Endothelial cell of umbilical vein (primary cell): ENCODE measurements at regions of chr17 and their contacts with region 1.

Region 1: DNA sequence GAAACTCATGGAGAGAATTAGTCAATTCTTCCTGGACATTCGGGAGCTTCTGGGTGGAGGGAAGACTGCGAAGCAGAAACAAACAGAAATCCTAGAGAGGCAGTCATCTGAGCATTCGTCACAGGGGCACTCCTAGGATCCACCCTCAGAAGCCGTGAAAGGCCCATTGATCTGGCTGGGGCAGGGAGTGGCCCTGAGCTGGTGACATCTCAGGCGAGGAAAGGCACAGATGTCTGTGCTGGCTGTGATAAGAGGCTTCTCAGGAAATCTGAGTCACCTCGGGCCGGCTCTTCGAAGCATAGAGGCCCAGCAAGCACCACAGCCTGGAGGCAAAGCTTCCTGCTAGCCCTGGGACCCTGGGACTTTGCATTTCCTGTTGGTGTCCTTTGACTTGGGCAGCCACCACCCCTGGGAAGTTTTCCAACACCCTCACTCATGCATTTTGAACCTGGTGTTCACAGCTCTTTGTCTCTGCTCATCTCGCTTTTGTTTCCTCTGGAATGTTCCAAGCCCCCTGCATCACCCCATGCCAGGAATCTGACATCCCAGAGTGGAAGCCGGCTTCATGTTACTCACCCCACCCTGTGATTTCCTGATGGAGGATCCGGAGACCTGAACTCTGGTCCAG is 23.3 kb upstream of the CDRT4 start:
- DNase-seq: peak; percentile 93
- H3K4me3 ChIP-seq: no peak overlapping the region
- H3K27ac ChIP-seq: peak overlapping the region; percentile 91
- H3K4me1 ChIP-seq: peaks cover 23% of the 10 kb centered on the region
- H3K27me3 ChIP-seq: no peaks in the 10 kb centered on the region
- CTCF ChIP-seq: no peak
- POLR2A ChIP-seq: peak; percentile 55

Region 2: DNA sequence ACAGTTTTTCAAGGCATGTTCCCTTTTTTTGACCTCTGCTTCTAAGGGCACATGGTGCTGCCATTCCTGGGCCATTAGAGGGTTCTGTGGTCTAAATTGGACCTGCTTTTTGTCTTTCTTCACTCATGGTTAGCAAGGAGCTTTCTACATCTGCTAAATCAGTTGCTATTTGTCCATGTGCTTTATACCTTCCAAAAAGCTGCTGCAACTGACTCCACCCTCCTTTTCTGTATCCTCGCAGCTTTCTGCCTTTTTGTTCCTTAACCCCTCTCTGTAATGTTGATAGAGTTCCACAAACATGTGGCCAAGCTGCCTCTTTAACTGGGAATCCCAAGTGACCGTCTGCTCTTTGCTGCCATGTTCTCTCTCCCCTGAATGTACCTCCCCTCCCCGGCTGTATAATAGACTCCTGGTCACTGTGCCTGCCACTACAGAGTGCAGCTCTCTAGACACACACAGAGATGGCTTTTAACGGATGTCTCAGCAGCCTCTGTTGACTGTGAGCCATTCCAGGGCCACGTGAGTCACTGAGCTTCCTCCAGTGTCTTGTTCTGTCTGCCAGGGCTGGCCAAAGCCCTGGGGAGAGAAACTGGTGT is 91.9 kb before region 1 on chr17:
- CTCF ChIA-PET with region 1: no interaction called
- POLR2A ChIA-PET with region 1: no interaction called
- dilution Hi-C with region 1: no loop called
- intact Hi-C with region 1: loop called (anchors 5 kb)
- DNase-seq: peak; percentile 5
- H3K4me3 ChIP-seq: no peak overlapping the region
- H3K27ac ChIP-seq: peak overlapping the region; percentile 9
- H3K4me1 ChIP-seq: peaks cover 16% of the 10 kb centered on the region
- H3K27me3 ChIP-seq: no peaks in the 10 kb centered on the region
- CTCF ChIP-seq: no peak
- POLR2A ChIP-seq: no peak

Region 3: DNA sequence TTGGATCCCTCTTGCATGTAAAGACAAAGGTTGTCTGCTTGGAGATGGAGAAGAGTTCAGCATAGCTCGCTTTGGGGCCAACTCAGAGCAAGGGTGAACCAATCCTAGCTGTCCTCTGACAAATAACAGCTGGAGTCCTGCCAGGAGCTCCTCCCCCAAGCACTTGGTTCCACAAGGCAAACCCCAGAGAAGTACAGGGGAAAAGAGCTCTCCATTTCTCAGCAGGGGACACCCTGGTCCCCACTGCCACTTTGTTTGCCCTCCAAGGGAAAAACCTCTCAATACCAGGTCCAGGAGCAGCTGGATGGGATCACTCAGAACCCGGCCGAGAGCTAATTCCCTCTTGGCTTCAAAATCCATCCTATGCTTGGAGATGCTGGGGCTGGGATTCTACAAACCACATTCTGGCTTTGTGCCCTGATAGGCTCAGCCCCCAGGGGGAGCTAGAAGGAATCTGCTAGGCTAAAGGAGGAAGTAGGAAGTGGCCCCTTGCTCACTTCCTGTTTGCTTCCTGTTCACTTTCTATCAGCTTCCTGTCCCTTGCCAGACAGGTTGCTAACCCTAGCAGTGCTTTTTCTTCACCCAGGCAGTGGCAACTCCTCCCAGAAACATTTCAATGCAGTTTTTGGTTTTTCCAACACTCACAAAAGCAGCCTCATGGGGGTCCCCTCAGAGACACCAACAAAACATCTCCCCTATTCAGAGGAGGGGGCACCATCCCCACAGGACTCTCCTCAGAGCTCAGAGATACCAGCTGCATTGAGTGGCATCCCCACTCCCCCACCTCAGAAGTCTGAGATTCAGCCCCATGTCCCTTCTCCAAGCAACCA is 54.1 kb before region 1 on chr17:
- CTCF ChIA-PET with region 1: interaction called, 3 read pairs
- POLR2A ChIA-PET with region 1: no interaction called
- dilution Hi-C with region 1: no loop called
- intact Hi-C with region 1: loop called (anchors 2 kb)
- DNase-seq: peak; percentile 32
- H3K4me3 ChIP-seq: no peak overlapping the region
- H3K27ac ChIP-seq: no peak overlapping the region
- H3K4me1 ChIP-seq: peaks cover 23% of the 10 kb centered on the region
- H3K27me3 ChIP-seq: no peaks in the 10 kb centered on the region
- CTCF ChIP-seq: peak; percentile 39 to 47
- POLR2A ChIP-seq: no peak

Region 4: GRCh38 chr17:15444805-15445204 is 45.9 kb before region 1 on chr17:
- CTCF ChIA-PET with region 1: interaction called, 11 read pairs
- POLR2A ChIA-PET with region 1: no interaction called
- dilution Hi-C with region 1: no loop called
- intact Hi-C with region 1: loop called (anchors 1 kb)
- DNase-seq: peak; percentile 96
- H3K4me3 ChIP-seq: no peak overlapping the region
- H3K27ac ChIP-seq: peak overlapping the region; percentile 92
- H3K4me1 ChIP-seq: peaks cover 51% of the 10 kb centered on the region
- H3K27me3 ChIP-seq: no peaks in the 10 kb centered on the region
- CTCF ChIP-seq: no peak
- POLR2A ChIP-seq: peak; percentile 74

Region 5: GRCh38 chr17:15469260-15469659 is 21.5 kb before region 1 on chr17:
- CTCF ChIA-PET with region 1: interaction called, 3 read pairs
- POLR2A ChIA-PET with region 1: no interaction called
- dilution Hi-C with region 1: no loop called
- intact Hi-C with region 1: loop called (anchors 1 kb)
- DNase-seq: peak; percentile 72
- H3K4me3 ChIP-seq: no peak overlapping the region
- H3K27ac ChIP-seq: peak overlapping the region; percentile 0
- H3K4me1 ChIP-seq: peaks cover 10% of the 10 kb centered on the region
- H3K27me3 ChIP-seq: no peaks in the 10 kb centered on the region
- CTCF ChIP-seq: no peak
- POLR2A ChIP-seq: no peak

Region 6: GRCh38 chr17:15479703-15480102 is 11.0 kb before region 1 on chr17:
- CTCF ChIA-PET with region 1: interaction called, 7 read pairs
- POLR2A ChIA-PET with region 1: no interaction called
- dilution Hi-C with region 1: no loop called
- intact Hi-C with region 1: loop called (anchors 1 kb)
- DNase-seq: peak; percentile 75
- H3K4me3 ChIP-seq: no peak overlapping the region
- H3K27ac ChIP-seq: peak overlapping the region; percentile 19
- H3K4me1 ChIP-seq: peaks cover 22% of the 10 kb centered on the region
- H3K27me3 ChIP-seq: no peaks in the 10 kb centered on the region
- CTCF ChIP-seq: no peak
- POLR2A ChIP-seq: no peak

Region 7: DNA sequence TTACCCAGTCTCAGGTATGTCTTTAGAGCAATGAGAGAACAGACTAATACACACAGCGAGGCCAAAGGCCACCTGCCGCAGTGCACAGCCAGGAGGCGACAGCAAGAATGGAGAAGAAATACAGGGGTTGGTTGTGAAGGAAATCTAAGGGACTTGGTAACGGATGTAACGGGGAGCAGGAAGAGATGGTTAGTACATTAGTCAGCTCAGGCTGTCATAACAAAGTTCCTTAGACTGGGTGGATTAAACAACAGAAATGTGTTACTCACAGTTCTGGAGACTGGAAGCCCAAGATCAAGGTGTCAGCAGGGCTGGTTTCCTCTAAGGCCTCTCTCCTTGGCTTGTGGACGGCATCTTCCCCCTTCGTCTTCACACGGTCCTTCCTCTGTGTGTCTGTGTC is 25.4 kb after region 1 on chr17:
- CTCF ChIA-PET with region 1: no interaction called
- POLR2A ChIA-PET with region 1: no interaction called
- dilution Hi-C with region 1: no loop called
- intact Hi-C with region 1: loop called (anchors 2 kb)
- DNase-seq: peak; percentile 80
- H3K4me3 ChIP-seq: no peak overlapping the region
- H3K27ac ChIP-seq: peak overlapping the region; percentile 83
- H3K4me1 ChIP-seq: peaks cover 18% of the 10 kb centered on the region
- H3K27me3 ChIP-seq: no peaks in the 10 kb centered on the region
- CTCF ChIP-seq: no peak
- POLR2A ChIP-seq: no peak